Calu3 (cell line): ENCODE measurements at regions of chr2 and their contacts with region 1.

Region 1: DNA sequence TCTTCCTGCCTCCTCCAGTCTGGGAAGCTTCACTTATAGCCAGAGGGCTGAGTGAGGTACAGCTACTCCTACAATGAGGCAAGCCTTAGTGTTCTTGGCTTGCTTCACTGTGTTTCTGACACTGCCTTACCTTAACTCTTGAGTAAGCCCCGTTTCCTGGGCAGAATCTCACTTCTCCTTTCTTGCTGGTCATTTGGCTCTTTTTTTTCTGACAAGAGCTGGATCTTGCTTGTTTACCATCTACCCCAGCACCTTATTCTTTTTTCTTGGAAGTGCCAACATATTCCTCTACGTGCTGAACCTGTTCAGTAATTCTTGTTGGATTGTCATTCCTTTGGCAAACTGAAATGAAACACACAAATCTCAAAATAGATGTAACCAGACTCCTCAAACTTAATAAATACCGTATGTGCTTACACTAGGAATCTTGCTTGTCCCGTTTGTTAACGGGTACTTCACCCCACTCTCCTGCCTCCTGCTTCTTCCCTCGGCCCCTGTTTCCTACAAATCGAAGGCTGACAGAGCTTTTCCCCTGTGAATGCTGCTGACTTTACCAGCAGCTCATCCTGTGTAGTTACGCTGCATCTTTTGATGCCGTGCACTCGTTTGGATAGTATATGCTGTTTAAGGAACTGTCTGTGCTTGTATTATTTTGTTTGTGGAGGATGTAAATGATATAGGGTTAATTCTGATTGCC is 132.2 kb downstream of the FMNL2 start:
- DNase-seq: no peak
- H3K4me3 Mint-ChIP-seq: peak overlapping the region; percentile 58
- H3K27ac Mint-ChIP-seq: peak overlapping the region; percentile 70
- H3K4me1 Mint-ChIP-seq: peaks cover 81% of the 10 kb centered on the region
- H3K27me3 Mint-ChIP-seq: no peaks in the 10 kb centered on the region
- CTCF ChIP-seq: no peak

Region 2: GRCh38 chr2:152200562-152201465 is 266.3 kb before region 1 on chr2:
- CTCF ChIA-PET with region 1: no interaction called
- intact Hi-C with region 1: loop called (anchors 5 kb)
- DNase-seq: peak; percentile 94
- H3K4me3 Mint-ChIP-seq: peak overlapping the region; percentile 70
- H3K27ac Mint-ChIP-seq: peak overlapping the region; percentile 95
- H3K4me1 Mint-ChIP-seq: peaks cover 43% of the 10 kb centered on the region
- H3K27me3 Mint-ChIP-seq: no peaks in the 10 kb centered on the region
- CTCF ChIP-seq: no peak

Region 3: GRCh38 chr2:152485954-152486736 is 19.0 kb after region 1 on chr2:
- CTCF ChIA-PET with region 1: interaction called, 21 read pairs
- intact Hi-C with region 1: no loop called
- DNase-seq: peak; percentile 52
- H3K4me3 Mint-ChIP-seq: peak overlapping the region; percentile 13
- H3K27ac Mint-ChIP-seq: peak overlapping the region; percentile 60
- H3K4me1 Mint-ChIP-seq: peaks cover 65% of the 10 kb centered on the region
- H3K27me3 Mint-ChIP-seq: no peaks in the 10 kb centered on the region
- CTCF ChIP-seq: no peak

Region 4: GRCh38 chr2:152505495-152505906 is 38.4 kb after region 1 on chr2:
- CTCF ChIA-PET with region 1: interaction called, 3 read pairs
- intact Hi-C with region 1: loop called (anchors 5 kb)
- DNase-seq: peak; percentile 30
- H3K4me3 Mint-ChIP-seq: peak overlapping the region; percentile 45
- H3K27ac Mint-ChIP-seq: peak overlapping the region; percentile 91
- H3K4me1 Mint-ChIP-seq: peaks cover 70% of the 10 kb centered on the region
- H3K27me3 Mint-ChIP-seq: no peaks in the 10 kb centered on the region
- CTCF ChIP-seq: no peak

Region 5: GRCh38 chr2:152627351-152627957 is 160.3 kb after region 1 on chr2:
- CTCF ChIA-PET with region 1: no interaction called
- intact Hi-C with region 1: loop called (anchors 5 kb)
- DNase-seq: peak; percentile 21
- H3K4me3 Mint-ChIP-seq: no peak overlapping the region
- H3K27ac Mint-ChIP-seq: no peak overlapping the region
- H3K4me1 Mint-ChIP-seq: no peaks in the 10 kb centered on the region
- H3K27me3 Mint-ChIP-seq: no peaks in the 10 kb centered on the region
- CTCF ChIP-seq: no peak